ENCODE measurements at regions of chr5 and their contacts with region 1.

Region 1: DNA sequence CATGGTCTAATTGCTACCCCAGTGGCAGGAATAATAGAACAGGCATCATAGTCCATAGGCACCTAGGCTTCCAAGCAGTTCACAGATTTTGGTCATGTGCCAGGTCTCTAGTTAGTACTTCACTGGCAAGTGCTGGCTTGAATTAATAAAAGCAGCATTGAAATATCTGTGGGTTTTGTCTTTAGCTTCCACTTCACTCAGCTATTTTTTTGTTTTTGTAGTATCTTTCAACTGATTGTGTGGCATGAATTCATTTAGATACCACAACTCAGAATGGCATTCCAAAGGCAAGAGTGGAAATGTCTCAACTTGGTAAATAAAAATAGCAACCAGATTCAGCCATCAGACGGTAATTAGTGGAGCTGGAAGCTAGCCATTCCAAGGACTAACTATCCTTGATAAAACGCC is 27.9 kb upstream of the ITGA2 start:
- DNase-seq: peak; percentile 89
- H3K4me3 ChIP-seq: no peak overlapping the region
- H3K27ac ChIP-seq: peak overlapping the region; percentile 68
- H3K4me1 ChIP-seq: peaks cover 35% of the 10 kb centered on the region
- H3K27me3 ChIP-seq: no peaks in the 10 kb centered on the region
- CTCF ChIP-seq: no peak

Region 2: GRCh38 chr5:52801329-52801728 is 159.9 kb before region 1 on chr5:
- CTCF ChIA-PET with region 1: no interaction called
- dilution Hi-C with region 1: no loop called
- in situ Hi-C with region 1: no loop called
- intact Hi-C with region 1: no loop called
- DNase-seq: peak; percentile 42
- H3K4me3 ChIP-seq: peak overlapping the region; percentile 65 to 91 (median 71)
- H3K27ac ChIP-seq: peak overlapping the region; percentile 94
- H3K4me1 ChIP-seq: peaks cover 20% of the 10 kb centered on the region
- H3K27me3 ChIP-seq: no peaks in the 10 kb centered on the region
- CTCF ChIP-seq: no peak

Region 3: DNA sequence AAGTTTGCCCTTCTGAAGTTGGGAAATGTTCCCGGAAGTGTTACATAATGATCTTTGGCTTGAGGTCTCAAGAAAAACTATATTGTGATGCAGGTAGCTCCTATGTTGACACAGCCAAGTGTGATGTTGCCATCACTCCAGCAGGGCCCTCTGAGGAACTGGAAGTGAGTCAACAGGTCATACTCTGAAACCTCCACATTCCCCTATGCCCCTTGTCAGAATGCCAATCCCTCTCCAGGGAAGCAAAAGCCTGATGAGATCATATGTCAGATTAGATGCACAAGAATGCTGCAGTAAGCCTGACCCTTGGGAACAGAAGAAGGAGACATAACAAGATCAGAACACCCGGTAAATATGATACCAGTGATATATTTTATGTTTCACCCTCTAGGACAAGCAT is 38.9 kb before region 1 on chr5:
- CTCF ChIA-PET with region 1: no interaction called
- dilution Hi-C with region 1: no loop called
- in situ Hi-C with region 1: no loop called
- intact Hi-C with region 1: loop called (anchors 1 kb)
- DNase-seq: peak; percentile 96
- H3K4me3 ChIP-seq: no peak overlapping the region
- H3K27ac ChIP-seq: peak overlapping the region; percentile 61
- H3K4me1 ChIP-seq: peaks cover 12% of the 10 kb centered on the region
- H3K27me3 ChIP-seq: no peaks in the 10 kb centered on the region
- CTCF ChIP-seq: no peak

Measured in mammary epithelial cell (primary cell).